Activated B cell treated with CpG ODN at 0.5 μM for 24 hours (primary cell): ENCODE measurements at regions of chr10 and their contacts with region 1.

Region 1: GRCh38 chr10:14878266-14879054 is at the start of gene SUV39H2:
- DNase-seq: peak; percentile 93
- ATAC-seq: peak; percentile 93
- H3K4me3 Mint-ChIP-seq: peak within 1 kb of the TSS; percentile 94
- H3K27ac Mint-ChIP-seq: peak within 1 kb of the TSS; percentile 86
- H3K4me1 Mint-ChIP-seq: peaks cover 25% of the 10 kb centered on the region
- H3K27me3 Mint-ChIP-seq: no peaks in the 10 kb centered on the region
- CTCF ChIP-seq: no peak
- total RNA-seq, gene SUV39H2: 7.4 and 8.1 TPM in 2 replicates

Region 2: GRCh38 chr10:12934777-12935176 is 1943.7 kb before region 1 on chr10:
- CTCF ChIA-PET with region 1: no interaction called
- POLR2A ChIA-PET with region 1: no interaction called
- intact Hi-C with region 1: no loop called
- DNase-seq: no peak
- ATAC-seq: no peak
- H3K4me3 Mint-ChIP-seq: no peak overlapping the region
- H3K27ac Mint-ChIP-seq: no peak overlapping the region
- H3K4me1 Mint-ChIP-seq: no peaks in the 10 kb centered on the region
- H3K27me3 Mint-ChIP-seq: peaks cover 15% of the 10 kb centered on the region
- CTCF ChIP-seq: no peak

Region 3: GRCh38 chr10:13586676-13587355 is 1291.6 kb before region 1 on chr10 and contains the start of gene PRPF18:
- CTCF ChIA-PET with region 1: no interaction called
- POLR2A ChIA-PET with region 1: no interaction called
- intact Hi-C with region 1: loop called (anchors 10 kb)
- DNase-seq: peak; percentile 93
- ATAC-seq: peak; percentile 100
- H3K4me3 Mint-ChIP-seq: peak within 1 kb of the TSS; percentile 100
- H3K27ac Mint-ChIP-seq: peak within 1 kb of the TSS; percentile 98
- H3K4me1 Mint-ChIP-seq: peaks cover 29% of the 10 kb centered on the region
- H3K27me3 Mint-ChIP-seq: peaks cover 19% of the 10 kb centered on the region
- CTCF ChIP-seq: peak; percentile 80
- total RNA-seq, gene PRPF18: 20.7 and 26.1 TPM in 2 replicates

Region 4: DNA sequence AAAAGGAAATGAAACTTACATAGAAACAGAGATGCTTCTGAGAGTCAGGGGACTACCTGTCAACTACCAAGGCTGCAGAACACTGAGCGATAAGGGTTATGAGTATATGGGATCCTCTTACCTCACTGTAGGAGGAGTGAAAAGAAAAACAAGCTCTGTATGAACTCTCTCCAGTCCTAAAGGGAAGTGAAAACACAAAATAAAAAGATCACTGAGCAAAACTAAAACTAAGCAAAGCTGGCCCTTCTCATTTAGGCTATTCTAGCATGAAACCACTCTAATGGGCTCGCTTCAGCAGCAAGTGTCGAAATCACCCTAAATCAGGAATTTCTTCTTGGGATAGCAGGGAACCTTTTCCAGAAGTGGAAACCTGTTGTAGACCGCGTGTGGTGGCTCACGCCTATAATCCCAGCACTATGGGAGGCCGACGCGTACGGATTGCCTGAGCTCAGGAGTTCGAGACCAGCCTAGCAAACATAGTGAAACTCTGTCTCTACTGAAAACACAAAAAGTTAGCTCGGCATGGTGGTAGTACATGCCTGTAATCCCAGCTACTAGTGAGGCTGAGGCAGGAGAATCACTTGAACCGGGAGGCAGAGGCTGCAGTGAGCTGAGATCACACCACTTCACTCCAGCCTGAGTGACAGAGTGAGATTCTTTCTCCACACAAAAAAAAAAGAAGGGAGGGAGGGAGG is 48.4 kb after region 1 on chr10:
- CTCF ChIA-PET with region 1: no interaction called
- POLR2A ChIA-PET with region 1: interaction called, 13 read pairs
- intact Hi-C with region 1: loop called (anchors 2 kb)
- DNase-seq: no peak
- ATAC-seq: peak; percentile 94
- H3K4me3 Mint-ChIP-seq: peak overlapping the region; percentile 46
- H3K27ac Mint-ChIP-seq: peak overlapping the region; percentile 91
- H3K4me1 Mint-ChIP-seq: peaks cover 32% of the 10 kb centered on the region
- H3K27me3 Mint-ChIP-seq: no peaks in the 10 kb centered on the region
- CTCF ChIP-seq: no peak

Region 5: GRCh38 chr10:14959276-14960057 is 81.0 kb after region 1 on chr10 and contains the start of gene MEIG1:
- CTCF ChIA-PET with region 1: no interaction called
- POLR2A ChIA-PET with region 1: interaction called, 15 read pairs
- intact Hi-C with region 1: loop called (anchors 1 kb)
- DNase-seq: peak; percentile 100
- ATAC-seq: peak; percentile 83
- H3K4me3 Mint-ChIP-seq: peak within 1 kb of the TSS; percentile 97
- H3K27ac Mint-ChIP-seq: peak within 1 kb of the TSS; percentile 98
- H3K4me1 Mint-ChIP-seq: peaks cover 14% of the 10 kb centered on the region
- H3K27me3 Mint-ChIP-seq: no peaks in the 10 kb centered on the region
- CTCF ChIP-seq: no peak
- total RNA-seq, gene MEIG1: 0.49 and 0.54 TPM in 2 replicates

Region 6: DNA sequence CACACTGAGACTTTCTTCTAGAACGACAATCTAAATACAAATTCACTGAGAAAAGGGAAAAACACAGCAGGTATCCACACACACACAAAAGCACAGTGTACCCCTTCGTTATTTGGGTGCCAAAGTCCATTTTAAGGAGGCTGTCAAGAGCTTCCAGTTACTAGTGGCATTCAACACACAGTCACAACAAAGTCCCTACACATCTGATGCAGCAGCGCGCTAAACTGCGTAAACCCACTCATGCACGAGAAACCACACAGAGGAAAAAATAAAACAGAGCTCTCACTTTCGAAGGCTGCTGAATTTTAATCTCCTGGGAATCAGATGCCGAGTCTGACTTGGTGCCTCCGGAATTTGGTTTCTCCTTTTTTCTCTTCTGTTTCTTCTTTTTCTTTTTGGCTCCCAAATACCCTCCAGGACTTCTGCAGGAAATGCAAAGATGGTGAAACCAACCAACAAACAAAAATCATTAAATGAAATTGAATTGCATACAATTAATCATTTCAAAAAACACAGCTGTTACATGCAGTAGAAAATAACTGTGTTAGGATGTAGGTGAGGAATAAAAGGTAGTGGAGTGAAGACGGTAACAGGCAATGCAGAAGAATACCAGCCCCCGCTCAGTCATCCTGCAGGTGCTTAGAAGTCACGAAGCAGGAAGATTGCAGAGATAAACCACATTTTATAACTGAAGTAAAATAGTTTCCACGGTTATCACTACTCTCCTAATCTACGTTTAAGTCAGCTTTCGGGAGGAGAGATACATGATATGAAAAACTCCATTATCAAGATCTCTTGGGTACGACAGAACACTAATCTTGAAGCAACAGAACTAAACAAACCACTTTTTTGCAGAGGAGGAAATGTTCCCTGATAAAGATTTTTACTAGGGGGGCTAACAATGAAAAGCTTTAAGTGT is 262.9 kb after region 1 on chr10:
- CTCF ChIA-PET with region 1: no interaction called
- POLR2A ChIA-PET with region 1: interaction called, 4 read pairs
- intact Hi-C with region 1: loop called (anchors 1 kb)
- DNase-seq: peak; percentile 32
- ATAC-seq: peak; percentile 94
- H3K4me3 Mint-ChIP-seq: peak overlapping the region; percentile 74
- H3K27ac Mint-ChIP-seq: peak overlapping the region; percentile 69
- H3K4me1 Mint-ChIP-seq: peaks cover 40% of the 10 kb centered on the region
- H3K27me3 Mint-ChIP-seq: no peaks in the 10 kb centered on the region
- CTCF ChIP-seq: no peak